HEK293 (cell line): ENCODE measurements at regions of chr20 and their contacts with region 1.

Region 1: GRCh38 chr20:38357653-38358207 is 11.4 kb downstream of the LBP start:
- H3K4me3 ChIP-seq: no peak overlapping the region
- H3K27ac ChIP-seq: no peak overlapping the region
- H3K4me1 ChIP-seq: no peaks in the 10 kb centered on the region
- CTCF ChIP-seq: no peak

Region 2: DNA sequence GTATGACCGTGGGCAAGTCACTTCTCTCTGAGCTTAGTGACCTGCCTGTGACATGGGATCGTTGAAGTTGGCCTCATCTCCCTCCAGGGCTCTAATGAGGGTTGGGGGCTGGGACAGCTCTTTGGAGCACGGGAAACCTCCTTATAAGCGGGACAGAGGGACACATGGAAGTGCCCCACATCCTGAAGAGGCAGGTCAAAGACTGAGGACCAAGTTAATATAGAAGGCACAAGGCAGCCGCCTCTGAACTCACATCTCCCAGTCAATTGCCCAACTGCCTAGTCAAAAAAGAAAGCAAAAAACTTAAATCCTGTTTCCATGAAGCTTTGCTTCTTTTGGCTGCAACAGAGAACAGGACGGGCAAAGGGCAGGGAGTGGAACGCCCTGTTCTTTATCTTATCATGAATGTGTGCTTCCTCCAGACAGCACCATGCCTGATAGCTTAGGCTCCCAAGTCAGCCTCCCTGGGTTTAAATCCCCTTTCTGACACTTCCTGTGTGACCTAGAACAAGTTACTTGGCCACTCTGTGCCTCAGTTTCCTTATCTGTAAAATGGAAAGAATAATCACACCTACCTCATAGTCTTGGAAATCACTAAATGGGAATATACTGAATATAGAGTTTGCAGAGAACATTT is 15.6 kb after region 1 on chr20:
- CTCF ChIA-PET with region 1: interaction called, 15 read pairs
- POLR2A ChIA-PET with region 1: no interaction called
- H3K4me3 ChIP-seq: no peak overlapping the region
- H3K27ac ChIP-seq: no peak overlapping the region
- H3K4me1 ChIP-seq: no peaks in the 10 kb centered on the region
- CTCF ChIP-seq: no peak

Region 3: GRCh38 chr20:38498909-38499308 is 141.2 kb after region 1 on chr20:
- CTCF ChIA-PET with region 1: no interaction called
- POLR2A ChIA-PET with region 1: no interaction called
- H3K4me3 ChIP-seq: no peak overlapping the region
- H3K27ac ChIP-seq: no peak overlapping the region
- H3K4me1 ChIP-seq: no peaks in the 10 kb centered on the region; the same call in 1 of the 2 replicates
- CTCF ChIP-seq: no peak